Activated CD4-positive, alpha-beta memory T cell treated with anti-CD3 and anti-CD28 coated beads for 36 hours (primary cell): ENCODE measurements at regions of chr7 and their contacts with region 1.

Region 1: DNA sequence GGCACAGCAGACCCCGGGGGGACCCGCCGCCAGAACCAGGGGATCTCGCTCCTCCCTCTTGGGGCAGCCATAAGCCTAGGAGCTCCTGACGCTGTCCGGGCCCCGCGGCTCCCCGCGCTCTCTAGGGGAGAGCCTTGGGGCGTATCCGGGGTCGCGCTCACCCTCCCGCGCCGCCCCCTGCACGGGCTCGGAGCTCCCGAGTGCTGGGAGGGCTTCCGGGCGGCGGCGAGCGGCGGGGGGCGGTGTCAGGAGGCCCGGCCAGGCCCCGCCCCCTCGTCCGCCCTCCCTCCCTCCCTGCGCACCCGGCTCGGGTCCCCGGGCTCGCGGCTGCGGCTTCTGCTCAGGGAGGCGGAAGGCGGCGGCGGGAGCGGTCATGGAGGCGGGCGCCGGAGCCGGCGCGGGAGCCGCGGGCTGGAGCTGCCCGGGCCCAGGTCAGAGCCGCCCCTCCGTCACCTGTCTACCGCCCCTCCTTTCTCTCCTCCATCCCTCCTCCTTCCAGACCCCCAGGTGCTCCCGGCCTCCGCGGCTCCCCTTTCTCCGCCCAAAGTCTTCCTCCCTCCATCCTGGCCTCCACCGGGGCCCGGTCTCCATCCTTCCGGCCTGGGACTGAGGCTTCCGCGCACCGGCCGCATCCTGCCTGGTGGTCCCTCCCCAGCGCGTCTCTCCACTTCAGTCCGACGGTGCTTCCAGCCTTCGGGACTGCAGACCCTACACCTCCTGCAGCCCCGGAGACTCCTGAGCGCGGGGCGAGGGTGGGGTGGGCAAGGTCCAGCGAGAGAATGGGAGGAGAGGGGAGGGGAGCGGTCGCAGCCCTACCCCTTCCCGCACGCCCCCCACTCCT is 427 bp upstream of the CCDC136 start:
- DNase-seq: peak; percentile 83
- H3K4me3 Mint-ChIP-seq: peak overlapping the region; percentile 77
- H3K27ac Mint-ChIP-seq: no peak overlapping the region
- H3K4me1 Mint-ChIP-seq: no peaks in the 10 kb centered on the region
- H3K27me3 Mint-ChIP-seq: no peaks in the 10 kb centered on the region

Region 2: DNA sequence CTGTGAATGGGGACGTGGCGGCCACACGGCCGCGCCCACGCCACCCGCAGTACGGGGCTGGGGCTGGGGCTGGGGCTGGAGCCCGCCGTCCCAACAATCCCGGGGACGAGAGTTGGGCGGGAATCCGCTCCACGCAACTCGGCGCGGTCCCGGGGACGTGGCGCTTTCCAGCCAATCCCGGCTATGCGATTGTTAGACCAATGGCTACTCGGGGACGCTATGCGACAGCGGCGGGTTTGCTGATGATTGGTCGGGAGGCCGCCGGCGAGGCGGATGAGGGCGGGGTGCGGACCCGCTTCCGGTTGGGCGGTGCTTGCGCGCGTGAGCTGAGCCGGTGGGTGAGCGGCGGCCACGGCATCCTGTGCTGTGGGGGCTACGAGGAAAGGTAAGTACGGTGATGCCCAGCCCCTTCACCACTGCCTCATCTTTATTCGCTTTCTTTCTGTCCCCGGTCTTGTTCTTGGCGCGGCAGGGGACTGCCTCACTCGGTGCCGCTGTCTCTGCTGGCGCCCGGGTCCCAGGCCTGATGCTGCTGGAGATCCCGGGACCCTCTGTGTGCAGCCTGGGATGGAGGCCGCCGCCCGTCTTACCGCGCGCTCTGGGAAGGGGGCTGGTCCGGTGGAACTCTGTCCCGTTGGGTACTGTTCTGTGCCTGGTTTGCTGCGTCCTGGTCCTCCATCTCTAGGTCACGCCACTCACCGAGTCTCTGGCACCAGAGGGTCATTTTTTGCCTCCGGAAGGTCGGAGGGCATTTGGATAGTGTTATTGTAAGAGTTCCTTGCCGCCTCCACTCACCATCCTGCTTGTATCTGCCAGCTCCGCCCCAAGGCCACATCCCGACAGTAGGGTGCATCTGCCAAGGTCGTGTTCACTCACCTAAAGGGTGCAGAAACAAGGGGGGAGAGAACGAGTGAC is 52.0 kb before region 1 on chr7 and contains the start of gene CALU:
- CTCF ChIA-PET with region 1: interaction called, 3 read pairs
- POLR2A ChIA-PET with region 1: no interaction called
- intact Hi-C with region 1: loop called (anchors 5 kb)
- DNase-seq: peak; percentile 97
- H3K4me3 Mint-ChIP-seq: peak within 1 kb of the TSS; percentile 97
- H3K27ac Mint-ChIP-seq: peak within 1 kb of the TSS; percentile 90
- H3K4me1 Mint-ChIP-seq: peaks cover 43% of the 10 kb centered on the region
- H3K27me3 Mint-ChIP-seq: no peaks in the 10 kb centered on the region
- total RNA-seq, gene CALU: 43.2 to 44.2 TPM